Activated CD8-positive, alpha-beta T cell treated with anti-CD3 and anti-CD28 coated beads, Interleukin-2, amount 10 ng/mL, durations not matched to agents 7 days and 5 days (primary cell): ENCODE measurements at regions of chr2 and their contacts with region 1.

Region 1: GRCh38 chr2:74250189-74250631 is 51.8 kb downstream of the MTHFD2 start:
- DNase-seq: peak; percentile 68
- ATAC-seq: peak; percentile 77
- H3K4me3 Mint-ChIP-seq: no peak overlapping the region
- H3K27ac Mint-ChIP-seq: no peak overlapping the region
- H3K4me1 Mint-ChIP-seq: peaks cover 2% of the 10 kb centered on the region
- H3K27me3 Mint-ChIP-seq: no peaks in the 10 kb centered on the region

Region 2: GRCh38 chr2:74261204-74261864 is 11.1 kb after region 1 on chr2:
- CTCF ChIA-PET with region 1: interaction called, 17 read pairs
- POLR2A ChIA-PET with region 1: no interaction called
- DNase-seq: no peak
- ATAC-seq: no peak
- H3K4me3 Mint-ChIP-seq: no peak overlapping the region
- H3K27ac Mint-ChIP-seq: no peak overlapping the region
- H3K4me1 Mint-ChIP-seq: peaks cover 5% of the 10 kb centered on the region
- H3K27me3 Mint-ChIP-seq: no peaks in the 10 kb centered on the region

Region 3: GRCh38 chr2:74290466-74291217 is 40.4 kb after region 1 on chr2:
- CTCF ChIA-PET with region 1: interaction called, 11 read pairs
- POLR2A ChIA-PET with region 1: no interaction called
- DNase-seq: peak; percentile 72
- ATAC-seq: peak; percentile 85
- H3K4me3 Mint-ChIP-seq: peak overlapping the region; percentile 20
- H3K27ac Mint-ChIP-seq: peak overlapping the region; percentile 85
- H3K4me1 Mint-ChIP-seq: peaks cover 20% of the 10 kb centered on the region
- H3K27me3 Mint-ChIP-seq: no peaks in the 10 kb centered on the region

Region 4: DNA sequence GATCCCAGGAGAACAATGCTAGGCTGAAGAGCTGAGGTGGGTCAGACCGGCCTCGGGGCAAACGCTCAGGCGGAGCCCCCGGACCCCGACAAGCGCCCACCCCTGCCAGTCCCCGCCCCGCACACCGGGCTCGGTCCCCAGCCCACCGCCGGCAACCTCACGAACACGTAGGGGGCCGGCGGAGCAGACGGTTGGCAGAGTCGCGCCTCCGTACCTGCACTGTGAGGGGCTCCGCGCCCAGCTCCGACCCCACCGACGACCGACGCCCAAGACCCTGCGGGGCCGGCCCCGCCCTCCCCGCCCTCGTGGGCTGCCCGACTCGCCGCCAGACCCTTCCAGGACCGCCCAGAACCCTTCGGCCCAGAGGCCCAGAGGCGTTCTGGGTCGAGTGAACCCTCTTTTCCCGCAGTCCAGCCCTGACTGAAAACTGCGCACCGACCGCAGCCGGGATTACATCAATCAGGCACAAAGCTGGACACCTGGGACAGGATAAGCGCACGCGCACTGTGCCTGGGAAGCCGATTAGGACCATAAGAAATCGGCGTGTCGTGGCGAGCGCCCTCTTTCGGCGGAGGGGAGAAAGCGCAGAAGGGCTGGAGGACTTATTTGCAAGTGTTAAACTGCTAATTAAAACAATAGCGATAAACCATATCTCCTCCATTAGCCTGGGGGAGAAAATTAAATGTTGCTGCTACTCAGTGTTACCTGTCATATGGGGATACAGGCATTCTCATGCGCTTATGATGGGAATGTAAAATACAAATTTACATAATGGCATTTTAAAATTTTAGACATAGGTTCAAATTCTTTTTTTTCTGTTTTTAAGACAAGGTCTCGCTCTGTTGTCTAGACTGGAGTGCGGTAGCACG is 141.6 kb after region 1 on chr2:
- CTCF ChIA-PET with region 1: interaction called, 13 read pairs
- POLR2A ChIA-PET with region 1: no interaction called
- DNase-seq: peak; percentile 97
- ATAC-seq: peak; percentile 88
- H3K4me3 Mint-ChIP-seq: peak overlapping the region; percentile 93
- H3K27ac Mint-ChIP-seq: peak overlapping the region; percentile 99
- H3K4me1 Mint-ChIP-seq: peaks cover 7% of the 10 kb centered on the region
- H3K27me3 Mint-ChIP-seq: peaks cover 6% of the 10 kb centered on the region